ENCODE measurements at regions of chr10 and their contacts with region 1.

Region 1: GRCh38 chr10:86585037-86585725 is 63.6 kb upstream of the WAPL start:
- DNase-seq: peak; percentile 48 to 81 (median 66)
- H3K4me3 ChIP-seq: peak overlapping the region in 22 of 59 donors; percentile 1 to 52 (median 25)
- H3K27ac ChIP-seq: peak overlapping the region in 56 of 59 donors; percentile 3 to 89 (median 78)
- H3K27me3 ChIP-seq: no peaks in the 10 kb centered on the region
- CTCF ChIP-seq: peak; percentile 80 to 99 (median 98)

Region 2: GRCh38 chr10:86521678-86522509 is 63.3 kb before region 1 on chr10 and contains the start of gene WAPL:
- intact Hi-C with region 1: loop called (anchors 2 to 10 kb)
- DNase-seq: peak; percentile 87 to 98 (median 94)
- H3K4me3 ChIP-seq: peak within 1 kb of the TSS; percentile 68 to 100 (median 96)
- H3K27ac ChIP-seq: peak within 1 kb of the TSS; percentile 62 to 97 (median 91)
- H3K27me3 ChIP-seq: no peaks in the 10 kb centered on the region
- CTCF ChIP-seq: peak in 27 of 56 donors; percentile 4 to 61 (median 25)
- total RNA-seq, gene WAPL: 25.8 to 40.0 (median 32.6) TPM

Region 3: GRCh38 chr10:86569335-86569734 is 15.8 kb before region 1 on chr10:
- intact Hi-C with region 1: no loop called
- DNase-seq: no peak
- H3K4me3 ChIP-seq: no peak overlapping the region
- H3K27ac ChIP-seq: no peak overlapping the region
- H3K27me3 ChIP-seq: no peaks in the 10 kb centered on the region
- CTCF ChIP-seq: no peak

Region 4: DNA sequence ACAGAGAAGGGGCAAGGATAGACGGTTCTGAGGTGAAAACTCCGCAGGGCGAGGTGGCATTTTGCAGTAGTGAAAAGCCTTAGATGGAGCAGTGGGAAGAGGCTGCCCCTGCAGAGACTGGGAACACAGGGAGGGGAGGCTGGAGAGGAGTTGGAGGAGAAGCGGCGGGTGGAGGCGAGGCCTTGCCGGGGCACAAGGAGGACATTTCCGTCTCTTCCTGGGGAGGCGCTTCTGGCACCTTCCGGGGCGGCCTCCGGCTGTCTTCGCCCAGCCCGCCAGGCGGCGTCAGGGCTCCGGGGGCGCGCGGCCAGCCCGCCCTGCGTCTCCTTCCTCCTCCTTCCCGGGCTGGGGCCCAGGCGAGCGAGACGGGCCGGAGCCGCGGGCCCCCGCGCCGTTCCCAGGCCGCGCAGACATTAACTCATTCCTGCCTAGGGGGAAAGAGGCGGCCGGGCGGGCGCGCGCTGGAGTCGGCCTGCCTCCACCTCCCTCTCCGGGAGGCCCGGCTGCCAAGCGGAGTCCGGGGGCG is 125.9 kb after region 1 on chr10:
- intact Hi-C with region 1: no loop called
- DNase-seq: peak; percentile 58 to 91 (median 80)
- H3K4me3 ChIP-seq: peak overlapping the region; percentile 45 to 82 (median 72)
- H3K27ac ChIP-seq: peak overlapping the region; percentile 66 to 99 (median 94)
- H3K27me3 ChIP-seq: no peaks in the 10 kb centered on the region
- CTCF ChIP-seq: peak; percentile 48 to 93 (median 84)